Activated CD4-positive, alpha-beta T cell treated with anti-CD3 and anti-CD28 coated beads, Interleukin-2, amount 10 ng/mL, durations not matched to agents 7 days and 5 days (primary cell): ENCODE measurements at regions of chr1 and their contacts with region 1.

Region 1: DNA sequence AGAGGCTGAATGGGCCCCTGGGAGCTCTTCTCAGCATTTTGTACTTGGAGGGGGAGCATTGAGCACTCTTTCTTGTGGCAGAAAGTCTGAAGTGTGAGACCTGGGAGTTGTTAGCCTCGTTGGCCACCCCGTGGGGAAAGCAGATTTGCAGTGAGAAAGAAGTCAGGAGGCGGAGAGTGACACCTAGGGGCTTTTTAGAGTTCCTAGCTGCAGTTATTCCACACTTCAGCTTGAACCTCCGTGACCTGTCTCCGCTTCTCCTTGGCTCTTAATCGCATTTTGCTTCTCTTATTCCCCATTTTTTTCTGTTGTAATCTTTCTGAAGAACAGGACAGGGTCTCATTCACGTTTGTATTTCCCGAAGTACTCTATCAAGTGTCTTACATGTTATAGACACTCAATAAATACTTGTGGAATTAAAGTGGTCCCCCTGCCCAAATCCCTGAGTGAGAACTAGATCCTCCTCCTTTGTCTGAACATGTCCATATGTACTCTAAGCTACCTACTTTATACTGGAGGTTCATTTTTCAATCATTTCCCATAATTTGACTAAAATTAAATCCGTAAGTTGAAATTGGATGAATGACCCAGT is 14.5 kb upstream of the C1orf141 start:
- DNase-seq: peak; percentile 70
- H3K4me3 Mint-ChIP-seq: no peak overlapping the region
- H3K27ac Mint-ChIP-seq: no peak overlapping the region
- H3K4me1 Mint-ChIP-seq: peaks cover 29% of the 10 kb centered on the region
- H3K27me3 Mint-ChIP-seq: peaks cover 24% of the 10 kb centered on the region

Region 2: GRCh38 chr1:66996018-66996682 is 153.1 kb before region 1 on chr1:
- CTCF ChIA-PET with region 1: interaction called, 15 read pairs
- POLR2A ChIA-PET with region 1: no interaction called
- DNase-seq: peak; percentile 80
- H3K4me3 Mint-ChIP-seq: no peak overlapping the region
- H3K27ac Mint-ChIP-seq: no peak overlapping the region
- H3K4me1 Mint-ChIP-seq: peaks cover 18% of the 10 kb centered on the region
- H3K27me3 Mint-ChIP-seq: no peaks in the 10 kb centered on the region

Region 3: DNA sequence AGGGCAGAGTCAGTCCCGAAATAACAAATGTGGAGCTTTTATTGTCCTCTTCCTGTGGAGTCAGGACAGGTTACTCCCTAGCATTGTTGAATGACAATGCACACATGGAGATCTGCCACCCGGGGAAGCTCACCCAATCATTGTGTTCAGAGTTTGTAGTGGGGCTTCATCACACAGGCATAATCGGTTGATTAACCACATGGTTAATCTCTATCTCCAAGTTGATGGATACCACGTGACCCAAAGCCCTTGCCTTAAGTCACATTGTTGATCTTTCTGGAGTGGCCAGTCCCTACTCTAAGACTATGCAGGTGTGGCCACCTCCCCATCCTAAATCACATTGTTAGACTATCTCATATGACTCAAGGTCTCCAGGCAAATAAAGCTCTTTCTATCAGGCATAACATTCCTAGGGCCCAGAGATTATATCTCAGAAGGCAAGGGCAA is 11.9 kb before region 1 on chr1:
- CTCF ChIA-PET with region 1: interaction called, 13 read pairs
- POLR2A ChIA-PET with region 1: no interaction called
- DNase-seq: no peak
- H3K4me3 Mint-ChIP-seq: no peak overlapping the region
- H3K27ac Mint-ChIP-seq: no peak overlapping the region
- H3K4me1 Mint-ChIP-seq: peaks cover 18% of the 10 kb centered on the region
- H3K27me3 Mint-ChIP-seq: peaks cover 3% of the 10 kb centered on the region

Region 4: DNA sequence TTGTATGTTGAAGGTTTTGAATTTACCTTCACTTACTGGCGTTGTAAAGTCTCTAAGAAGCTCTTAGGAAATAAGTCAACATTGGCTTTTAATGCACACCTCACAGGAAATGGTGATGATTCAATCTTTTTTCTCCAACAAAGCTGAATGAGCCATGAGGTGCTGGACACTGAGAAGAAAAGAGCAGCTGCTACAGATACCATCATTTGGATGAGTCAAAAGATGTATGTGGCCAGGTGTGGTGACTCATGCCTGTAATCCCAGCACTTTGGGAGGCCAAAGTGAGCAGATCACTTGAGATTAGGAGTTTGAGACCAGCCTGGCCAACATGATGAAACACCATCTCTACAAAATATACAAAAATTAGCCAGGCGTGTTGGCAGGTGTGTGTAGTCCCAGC is 13.7 kb after region 1 on chr1:
- CTCF ChIA-PET with region 1: interaction called, 16 read pairs
- POLR2A ChIA-PET with region 1: interaction called, 3 read pairs
- DNase-seq: peak; percentile 28
- H3K4me3 Mint-ChIP-seq: no peak overlapping the region
- H3K27ac Mint-ChIP-seq: peak overlapping the region; percentile 68
- H3K4me1 Mint-ChIP-seq: peaks cover 30% of the 10 kb centered on the region
- H3K27me3 Mint-ChIP-seq: peaks cover 4% of the 10 kb centered on the region